Breast epithelium (tissue), 4 donors: ENCODE measurements at regions of chr22 and their contacts with region 1.

Region 1: DNA sequence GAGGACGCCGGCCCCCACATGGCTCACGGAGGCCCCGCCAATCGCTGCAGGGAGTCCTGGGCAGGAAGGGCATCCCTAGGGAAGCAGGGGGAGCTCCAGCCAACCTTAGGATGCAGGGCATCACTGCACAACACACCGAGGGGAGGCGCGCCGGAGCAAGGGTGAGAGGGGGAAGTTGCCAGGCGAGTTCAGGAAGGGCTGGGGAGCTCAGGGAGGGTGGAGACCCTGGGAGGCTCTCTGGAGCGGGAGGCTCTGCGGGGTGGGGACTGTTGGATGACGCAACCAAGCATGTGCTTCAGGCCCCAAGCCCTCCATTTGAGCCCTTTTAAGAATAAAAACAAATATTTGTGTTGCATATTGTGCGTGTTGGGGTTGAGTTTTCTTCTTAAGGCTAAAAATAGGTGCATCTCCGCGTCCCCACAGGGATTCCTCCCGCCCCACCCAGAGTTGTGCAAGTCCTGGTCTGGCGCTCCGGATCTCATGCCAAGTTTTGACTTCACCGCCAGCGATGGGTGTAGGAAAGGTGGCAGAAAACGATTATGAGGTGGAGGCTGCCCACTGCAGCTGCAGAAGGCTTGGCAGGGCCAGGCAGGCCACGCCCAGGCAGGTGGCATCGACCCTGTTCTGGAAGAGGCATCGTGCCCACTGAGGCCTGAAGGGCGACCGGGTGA is 65.2 kb downstream of the WNT7B start:
- DNase-seq: peak; percentile 75 to 80
- H3K4me3 ChIP-seq: peak overlapping the region in 1 of 3 donors; percentile 39
- H3K27ac ChIP-seq: peak overlapping the region; percentile 25 to 43
- H3K4me1 ChIP-seq: peaks cover 4 to 12% of the 10 kb centered on the region in 2 donors
- H3K27me3 ChIP-seq: no peaks in the 10 kb centered on the region
- CTCF ChIP-seq: no peak
- POLR2A ChIP-seq: no peak

Region 2: GRCh38 chr22:45397806-45398205 is 513.9 kb before region 1 on chr22:
- intact Hi-C with region 1: loop called (anchors 5 kb)
- DNase-seq: no peak
- H3K4me3 ChIP-seq: no peak overlapping the region
- H3K27ac ChIP-seq: no peak overlapping the region
- H3K4me1 ChIP-seq: no peaks in the 10 kb centered on the region
- H3K27me3 ChIP-seq: no peaks in the 10 kb centered on the region
- CTCF ChIP-seq: no peak
- POLR2A ChIP-seq: no peak

Region 3: DNA sequence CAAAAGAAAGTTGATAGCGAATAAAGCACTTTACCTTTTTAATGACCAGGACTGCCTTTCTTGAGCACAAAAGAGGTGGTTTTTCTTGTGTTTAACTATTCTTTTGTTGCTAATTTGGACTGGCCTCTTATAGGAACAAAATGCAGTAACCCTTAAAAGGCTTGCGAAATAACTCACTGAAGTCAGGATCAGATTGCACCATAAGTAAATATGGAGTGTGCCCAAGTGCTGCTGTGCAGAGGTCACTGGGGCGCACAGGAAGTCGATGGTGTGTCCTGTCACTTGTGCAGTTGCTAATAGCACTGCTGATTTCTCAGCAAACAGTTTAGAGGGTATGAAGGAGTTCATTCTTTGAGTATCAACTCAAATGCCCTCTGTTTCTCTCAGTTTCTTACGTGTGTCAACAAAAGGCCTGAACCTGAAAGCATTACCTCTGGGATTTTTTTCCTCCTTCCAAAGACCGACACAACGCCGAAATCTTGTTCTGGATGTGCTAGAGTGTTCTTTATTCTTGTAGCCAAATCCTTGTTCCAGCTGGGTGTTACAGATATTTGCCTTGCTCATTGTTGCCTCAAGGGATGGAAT is 168.8 kb before region 1 on chr22:
- intact Hi-C with region 1: loop called (anchors 5 kb)
- DNase-seq: no peak
- H3K4me3 ChIP-seq: no peak overlapping the region
- H3K27ac ChIP-seq: peak overlapping the region in 1 of 2 donors; percentile 51
- H3K4me1 ChIP-seq: no peaks in the 10 kb centered on the region
- H3K27me3 ChIP-seq: no peaks in the 10 kb centered on the region
- CTCF ChIP-seq: no peak
- POLR2A ChIP-seq: no peak

Region 4: GRCh38 chr22:45878051-45878781 is 33.5 kb before region 1 on chr22:
- intact Hi-C with region 1: no loop called
- DNase-seq: peak in 1 of 2 donors; percentile 49
- H3K4me3 ChIP-seq: no peak overlapping the region
- H3K27ac ChIP-seq: no peak overlapping the region
- H3K4me1 ChIP-seq: no peaks in the 10 kb centered on the region
- H3K27me3 ChIP-seq: peaks cover 0 to 16% of the 10 kb centered on the region in 2 donors
- CTCF ChIP-seq: no peak
- POLR2A ChIP-seq: no peak

Region 5: GRCh38 chr22:45896261-45896951 is 15.3 kb before region 1 on chr22:
- intact Hi-C with region 1: no loop called
- DNase-seq: peak; percentile 76 to 82
- H3K4me3 ChIP-seq: no peak overlapping the region
- H3K27ac ChIP-seq: peak overlapping the region; percentile 86 to 92
- H3K4me1 ChIP-seq: peaks cover 3 to 8% of the 10 kb centered on the region in 2 donors
- H3K27me3 ChIP-seq: peaks cover 0 to 13% of the 10 kb centered on the region in 2 donors
- CTCF ChIP-seq: no peak
- POLR2A ChIP-seq: no peak